Stomach (tissue), 19 donors: ENCODE measurements at regions of chr7 and their contacts with region 1.

Region 1: GRCh38 chr7:28853834-28854749 is 104.0 kb downstream of the TRIL start:
- DNase-seq: peak; percentile 81 to 92
- H3K4me3 ChIP-seq: peak overlapping the region; percentile 41 to 61 (median 54)
- H3K27ac ChIP-seq: peak overlapping the region in 1 of 5 donors; percentile 12
- H3K4me1 ChIP-seq: peaks cover 0 to 14% (median 12%) of the 10 kb centered on the region in 4 donors
- H3K27me3 ChIP-seq: peaks cover 0 to 31% (median 8%) of the 10 kb centered on the region in 3 donors
- CTCF ChIP-seq: peak in 5 of 7 experiments; percentile 74 to 90 (median 83)
- EP300 ChIP-seq: no peak
- POLR2A ChIP-seq: no peak

Region 2: GRCh38 chr7:28389504-28390395 is 464.3 kb before region 1 on chr7:
- intact Hi-C with region 1: loop called (anchors 5 kb)
- DNase-seq: peak in 1 of 2 donors; percentile 85
- H3K4me3 ChIP-seq: peak overlapping the region in 3 of 4 donors; percentile 10 to 16 (median 11)
- H3K27ac ChIP-seq: peak overlapping the region in 1 of 5 donors; percentile 39
- H3K4me1 ChIP-seq: peaks cover 0 to 12% (median 5%) of the 10 kb centered on the region in 4 donors
- H3K27me3 ChIP-seq: peaks cover 0 to 11% (median 0%) of the 10 kb centered on the region in 3 donors
- CTCF ChIP-seq: peak in 5 of 7 experiments; percentile 32 to 84 (median 63)
- EP300 ChIP-seq: no peak
- POLR2A ChIP-seq: no peak